GM12878 (cell line): ENCODE measurements at regions of chr20 and their contacts with region 1.

Region 1: DNA sequence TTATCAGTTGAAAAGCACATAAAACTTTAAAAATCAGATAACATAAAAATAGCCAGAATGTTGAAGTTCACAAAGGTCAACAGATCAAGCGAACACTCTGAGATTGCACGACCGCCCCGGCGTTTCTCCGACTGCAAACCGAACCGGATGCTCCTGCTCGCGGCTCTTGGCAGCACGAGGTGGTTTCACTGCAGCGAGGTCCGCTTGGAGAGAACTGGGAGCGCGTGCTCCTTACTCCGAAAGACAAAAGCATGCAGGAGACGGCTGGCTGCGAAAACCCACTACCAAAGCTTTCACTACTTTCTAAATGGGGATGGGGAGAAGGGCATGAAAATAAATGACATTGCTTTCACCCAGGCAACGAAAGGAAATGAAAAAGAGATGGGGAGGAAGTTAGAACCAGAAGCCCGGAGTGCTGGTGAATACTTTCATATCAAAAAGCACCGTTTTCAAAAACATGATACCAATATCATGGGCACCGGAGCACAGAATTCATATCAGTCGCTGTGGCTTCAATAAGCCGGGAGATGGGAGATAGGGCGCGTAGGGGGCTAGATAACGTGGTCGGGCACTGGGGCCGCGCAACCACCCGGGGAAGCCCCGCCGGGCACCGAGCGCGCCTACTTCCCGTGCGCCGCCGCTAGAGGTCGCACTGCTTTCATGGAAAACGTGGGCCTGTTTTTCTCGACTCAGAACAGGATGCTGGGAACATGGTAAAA is 8.3 kb upstream of the ANKRD60 start:
- DNase-seq: peak; percentile 12
- ATAC-seq: peak; percentile 97
- H3K4me3 ChIP-seq: peak overlapping the region; percentile 49
- H3K27ac ChIP-seq: 0 out of 2 replicates have a peak overlapping the region, but pooled peaks have one; percentile 20
- H3K4me1 ChIP-seq: no peaks in the 10 kb centered on the region; the same call in 1 of the 2 replicates
- H3K27me3 ChIP-seq: no peaks in the 10 kb centered on the region
- CTCF ChIP-seq: peak; percentile 95 to 96 (median 95)
- EP300 ChIP-seq: no peak
- POLR2A ChIP-seq: no peak
- RAD21 ChIP-seq: peak; percentile 93

Region 2: DNA sequence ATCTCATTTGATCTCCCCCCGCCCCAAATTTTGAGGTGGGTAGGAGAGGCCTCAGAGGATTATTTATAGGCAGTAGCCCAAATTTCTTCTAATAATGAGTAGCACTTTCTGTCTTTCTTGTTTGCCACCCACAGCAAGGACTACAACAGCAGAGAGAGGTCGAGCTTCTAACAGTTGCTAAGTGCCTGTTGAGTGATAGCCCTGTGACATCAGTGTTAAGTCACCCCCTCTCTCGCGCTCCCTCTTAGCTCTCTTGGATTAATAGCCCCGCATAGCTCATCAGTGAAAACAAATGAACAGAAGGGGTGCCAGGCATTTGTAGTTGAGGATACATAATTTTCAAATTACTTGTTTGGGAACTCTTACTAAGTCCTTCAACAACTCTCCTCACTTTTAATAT is 11.8 kb before region 1 on chr20:
- CTCF ChIA-PET with region 1: interaction called, 10 read pairs
- POLR2A ChIA-PET with region 1: no interaction called
- RAD21 ChIA-PET with region 1: no interaction called
- SMC1A ChIA-PET with region 1: interaction called, 6 read pairs
- in situ Hi-C with region 1: no loop called
- intact Hi-C with region 1: no loop called
- DNase-seq: no peak
- ATAC-seq: no peak
- H3K4me3 ChIP-seq: no peak overlapping the region
- H3K27ac ChIP-seq: no peak overlapping the region
- H3K4me1 ChIP-seq: no peaks in the 10 kb centered on the region
- H3K27me3 ChIP-seq: peaks cover 8 to 19% of the 10 kb centered on the region in 2 experiments
- CTCF ChIP-seq: no peak
- EP300 ChIP-seq: no peak
- POLR2A ChIP-seq: no peak
- RAD21 ChIP-seq: no peak

Region 3: GRCh38 chr20:58271606-58272402 is 35.0 kb after region 1 on chr20:
- CTCF ChIA-PET with region 1: no interaction called
- POLR2A ChIA-PET with region 1: no interaction called
- RAD21 ChIA-PET with region 1: no interaction called
- SMC1A ChIA-PET with region 1: no interaction called
- in situ Hi-C with region 1: no loop called
- intact Hi-C with region 1: no loop called
- DNase-seq: no peak
- ATAC-seq: no peak
- H3K4me3 ChIP-seq: no peak overlapping the region
- H3K27ac ChIP-seq: no peak overlapping the region
- H3K4me1 ChIP-seq: no peaks in the 10 kb centered on the region
- H3K27me3 ChIP-seq: no peaks in the 10 kb centered on the region
- CTCF ChIP-seq: no peak
- EP300 ChIP-seq: no peak
- POLR2A ChIP-seq: no peak
- RAD21 ChIP-seq: no peak

Region 4: GRCh38 chr20:58340853-58341252 is 104.1 kb after region 1 on chr20:
- CTCF ChIA-PET with region 1: no interaction called
- POLR2A ChIA-PET with region 1: no interaction called
- RAD21 ChIA-PET with region 1: no interaction called
- SMC1A ChIA-PET with region 1: no interaction called
- in situ Hi-C with region 1: no loop called
- intact Hi-C with region 1: no loop called
- DNase-seq: no peak
- ATAC-seq: no peak
- H3K4me3 ChIP-seq: no peak overlapping the region
- H3K27ac ChIP-seq: no peak overlapping the region
- H3K4me1 ChIP-seq: no peaks in the 10 kb centered on the region
- H3K27me3 ChIP-seq: no peaks in the 10 kb centered on the region
- CTCF ChIP-seq: no peak
- EP300 ChIP-seq: no peak
- POLR2A ChIP-seq: no peak
- RAD21 ChIP-seq: no peak

Region 5: DNA sequence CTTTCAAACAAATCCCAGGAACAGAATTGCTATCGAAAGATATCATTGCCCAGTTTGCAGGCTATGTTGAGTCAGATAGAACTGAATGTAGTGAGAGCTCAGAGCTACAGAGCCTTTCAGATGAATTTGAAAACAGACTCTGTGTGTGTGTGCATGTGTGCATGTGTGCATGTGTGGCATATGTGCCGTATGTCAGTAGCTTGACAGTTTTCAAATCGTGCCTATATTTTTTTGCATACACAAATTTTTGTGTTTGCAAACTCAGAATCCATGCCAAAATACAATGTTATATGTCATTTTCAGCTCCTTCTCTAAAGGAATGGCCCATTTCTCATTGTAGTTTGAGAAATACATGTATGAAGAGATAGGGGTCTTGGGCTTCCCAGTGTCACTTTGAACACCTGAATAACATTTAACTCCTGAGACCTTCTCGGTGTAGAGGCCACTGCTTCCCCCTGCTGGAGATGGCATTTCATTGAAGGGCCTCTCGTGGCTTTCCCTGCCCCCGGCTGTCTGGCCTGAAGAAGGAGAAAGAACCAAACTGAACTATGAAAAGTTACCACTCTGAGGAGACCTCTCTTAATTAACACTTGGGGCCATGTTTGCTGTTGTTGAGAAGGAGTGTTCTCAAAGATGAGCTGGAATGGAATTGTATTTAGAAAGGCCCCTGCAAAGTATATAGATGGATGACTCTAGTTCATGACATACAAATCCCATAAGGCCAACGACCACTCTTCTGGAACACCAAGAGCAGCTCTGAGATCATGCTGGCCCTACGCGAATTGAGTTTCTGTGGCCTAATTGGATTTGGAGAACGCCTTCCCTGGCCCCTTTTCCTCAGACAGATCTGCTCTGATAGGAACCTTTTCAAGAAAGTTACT is 211.0 kb after region 1 on chr20:
- CTCF ChIA-PET with region 1: interaction called, 60 read pairs
- POLR2A ChIA-PET with region 1: no interaction called
- RAD21 ChIA-PET with region 1: interaction called, 8 read pairs
- SMC1A ChIA-PET with region 1: interaction called, 27 read pairs
- in situ Hi-C with region 1: no loop called
- intact Hi-C with region 1: loop called (anchors 1 kb)
- DNase-seq: no peak
- ATAC-seq: peak; percentile 86
- H3K4me3 ChIP-seq: no peak overlapping the region
- H3K27ac ChIP-seq: no peak overlapping the region
- H3K4me1 ChIP-seq: peaks cover 13% of the 10 kb centered on the region
- H3K27me3 ChIP-seq: no peaks in the 10 kb centered on the region
- CTCF ChIP-seq: peak; percentile 71 to 78 (median 73)
- EP300 ChIP-seq: no peak
- POLR2A ChIP-seq: no peak
- RAD21 ChIP-seq: peak; percentile 86

Region 6: GRCh38 chr20:58692594-58693226 is 455.9 kb after region 1 on chr20 and contains the start of gene NPEPL1:
- CTCF ChIA-PET with region 1: no interaction called
- POLR2A ChIA-PET with region 1: no interaction called
- RAD21 ChIA-PET with region 1: no interaction called
- SMC1A ChIA-PET with region 1: no interaction called
- in situ Hi-C with region 1: loop called (anchors 25 kb)
- intact Hi-C with region 1: loop called (anchors 10 kb)
- DNase-seq: no peak
- ATAC-seq: peak; percentile 97
- H3K4me3 ChIP-seq: peak within 1 kb of the TSS; percentile 75
- H3K27ac ChIP-seq: 0 out of 2 replicates have a peak within 1 kb of the TSS, but pooled peaks have one; percentile 25
- H3K4me1 ChIP-seq: peaks cover 5% of the 10 kb centered on the region
- H3K27me3 ChIP-seq: no peaks in the 10 kb centered on the region
- CTCF ChIP-seq: peak in 2 of 3 experiments; percentile 36 to 49; a peak in 3 of 6 replicates
- EP300 ChIP-seq: no peak
- POLR2A ChIP-seq: 0 out of 2 replicates have a peak, but pooled peaks have one; percentile 58
- RAD21 ChIP-seq: peak; percentile 44
- polyA plus RNA-seq, gene NPEPL1: 0.08 to 0.80 TPM

Region 7: DNA sequence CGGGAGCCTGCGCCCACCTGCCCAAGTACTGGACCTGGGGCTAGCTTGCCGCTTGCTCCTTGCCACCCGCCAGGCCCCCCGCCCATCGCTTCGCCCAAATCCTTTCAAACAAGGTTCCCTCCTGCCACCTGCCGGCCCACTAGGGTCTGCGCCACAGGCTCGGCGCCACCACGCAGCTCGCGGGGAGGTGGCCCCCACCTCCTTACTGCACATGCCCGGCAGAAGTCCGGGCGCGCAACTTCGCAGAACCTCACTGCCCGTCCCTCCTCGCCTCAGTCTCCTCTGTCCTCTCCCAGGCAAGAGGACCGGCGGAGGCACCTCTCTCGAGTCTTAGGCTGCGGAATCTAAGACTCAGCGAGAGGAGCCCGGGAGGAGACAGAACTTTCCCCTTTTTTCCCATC is 602.7 kb after region 1 on chr20:
- CTCF ChIA-PET with region 1: no interaction called
- POLR2A ChIA-PET with region 1: no interaction called
- RAD21 ChIA-PET with region 1: no interaction called
- SMC1A ChIA-PET with region 1: no interaction called
- in situ Hi-C with region 1: no loop called
- intact Hi-C with region 1: loop called (anchors 5 kb)
- DNase-seq: no peak
- ATAC-seq: peak; percentile 66
- H3K4me3 ChIP-seq: no peak overlapping the region
- H3K27ac ChIP-seq: no peak overlapping the region
- H3K4me1 ChIP-seq: no peaks in the 10 kb centered on the region
- H3K27me3 ChIP-seq: peaks cover 0 to 2% of the 10 kb centered on the region in 2 experiments; a peak in 3 of 4 replicates
- CTCF ChIP-seq: peak; percentile 22 to 45 (median 40); a peak in 4 of 6 replicates
- EP300 ChIP-seq: no peak
- POLR2A ChIP-seq: no peak
- RAD21 ChIP-seq: peak; percentile 30; the same call in 1 of the 2 replicates

Region 8: DNA sequence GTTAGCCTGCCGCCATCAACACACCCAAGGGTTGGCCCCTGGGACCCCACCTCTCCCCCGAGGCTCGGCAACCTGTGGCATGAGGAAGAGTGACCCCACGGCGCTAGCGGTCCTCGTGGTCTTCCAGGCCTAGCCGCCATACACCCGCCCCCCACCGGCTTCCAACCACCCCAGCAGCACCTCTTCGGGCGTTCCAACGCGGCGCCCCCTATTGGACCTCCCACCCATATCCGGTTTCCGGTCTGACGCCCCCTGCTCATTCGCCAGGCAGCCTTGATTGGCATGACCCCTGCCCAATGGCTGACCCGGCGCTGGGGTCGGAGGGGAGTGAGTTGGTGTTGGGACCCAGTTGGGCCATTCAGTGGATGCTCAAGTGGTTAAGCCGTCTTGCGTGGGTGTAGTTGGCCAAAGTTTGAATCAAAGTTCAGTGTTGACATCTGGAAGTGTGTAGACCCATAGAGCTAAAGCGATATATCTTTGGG is 614.0 kb after region 1 on chr20 and contains the start of gene GNAS-AS1:
- CTCF ChIA-PET with region 1: interaction called, 3 read pairs
- POLR2A ChIA-PET with region 1: no interaction called
- RAD21 ChIA-PET with region 1: no interaction called
- SMC1A ChIA-PET with region 1: interaction called, 4 read pairs
- in situ Hi-C with region 1: loop called (anchors 10 kb)
- intact Hi-C with region 1: loop called (anchors 5 kb)
- DNase-seq: peak; percentile 53
- ATAC-seq: peak; percentile 95
- H3K4me3 ChIP-seq: peak within 1 kb of the TSS; percentile 72
- H3K27ac ChIP-seq: peak within 1 kb of the TSS; percentile 39; the same call in 1 of the 2 replicates
- H3K4me1 ChIP-seq: 0 out of 2 replicates have a peak, but pooled peaks cover 3% of the 10 kb centered on the region
- H3K27me3 ChIP-seq: peaks cover 0 to 1% of the 10 kb centered on the region in 2 experiments; a peak in 2 of 4 replicates
- CTCF ChIP-seq: no peak
- EP300 ChIP-seq: no peak
- POLR2A ChIP-seq: peak; percentile 63
- RAD21 ChIP-seq: no peak
- polyA plus RNA-seq, gene GNAS-AS1: 0.06 to 0.35 TPM